Aorta (tissue), 5 donors: ENCODE measurements at regions of chr18 and their contacts with region 1.

Region 1: DNA sequence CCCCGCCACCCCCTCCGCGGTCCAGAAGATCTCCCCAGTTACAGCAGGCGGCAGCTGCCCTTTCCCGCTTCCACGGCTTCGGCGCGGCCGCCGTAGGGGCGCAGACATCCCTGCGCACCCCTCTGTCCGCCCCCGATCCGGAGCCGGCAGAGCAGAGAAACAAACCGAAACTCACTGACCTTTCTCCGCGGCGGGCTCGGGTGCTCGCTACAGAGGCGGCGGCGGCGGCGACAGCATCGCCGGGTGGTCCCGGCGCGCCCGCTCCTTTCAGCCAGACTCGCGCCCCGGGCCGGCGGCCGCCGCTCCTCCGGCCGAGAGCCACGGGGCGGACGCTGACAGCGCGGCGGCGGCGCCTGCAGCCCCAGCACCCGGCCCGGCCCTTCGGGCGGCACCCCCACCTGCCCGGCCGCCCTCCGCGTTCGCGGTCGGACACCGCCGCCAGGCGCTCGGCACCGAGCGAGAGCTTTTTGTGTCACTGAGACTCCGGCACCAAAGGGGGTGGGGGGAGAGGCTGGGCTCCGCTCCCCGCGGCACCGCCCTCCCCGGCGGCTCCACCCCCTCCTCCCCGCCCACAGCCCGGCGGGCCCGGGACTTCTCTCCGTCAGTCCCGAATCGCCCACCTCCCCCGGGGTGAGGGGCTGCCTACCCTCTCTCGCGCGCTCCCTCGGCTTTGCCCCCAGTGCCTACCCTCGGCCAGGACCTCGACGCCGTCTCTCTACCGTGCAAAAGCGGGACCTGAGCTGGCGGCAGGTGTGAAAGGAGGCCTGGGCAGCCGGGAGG is 1.4 kb upstream of the RNF152 start:
- DNase-seq: peak; percentile 87 to 93
- ATAC-seq: peak; percentile 94
- H3K4me3 ChIP-seq: peak overlapping the region; percentile 94 to 98
- H3K27ac ChIP-seq: peak overlapping the region; percentile 79 to 88
- H3K4me1 ChIP-seq: peaks cover 0 to 3% of the 10 kb centered on the region in 2 donors
- H3K27me3 ChIP-seq: no peaks in the 10 kb centered on the region

Region 2: DNA sequence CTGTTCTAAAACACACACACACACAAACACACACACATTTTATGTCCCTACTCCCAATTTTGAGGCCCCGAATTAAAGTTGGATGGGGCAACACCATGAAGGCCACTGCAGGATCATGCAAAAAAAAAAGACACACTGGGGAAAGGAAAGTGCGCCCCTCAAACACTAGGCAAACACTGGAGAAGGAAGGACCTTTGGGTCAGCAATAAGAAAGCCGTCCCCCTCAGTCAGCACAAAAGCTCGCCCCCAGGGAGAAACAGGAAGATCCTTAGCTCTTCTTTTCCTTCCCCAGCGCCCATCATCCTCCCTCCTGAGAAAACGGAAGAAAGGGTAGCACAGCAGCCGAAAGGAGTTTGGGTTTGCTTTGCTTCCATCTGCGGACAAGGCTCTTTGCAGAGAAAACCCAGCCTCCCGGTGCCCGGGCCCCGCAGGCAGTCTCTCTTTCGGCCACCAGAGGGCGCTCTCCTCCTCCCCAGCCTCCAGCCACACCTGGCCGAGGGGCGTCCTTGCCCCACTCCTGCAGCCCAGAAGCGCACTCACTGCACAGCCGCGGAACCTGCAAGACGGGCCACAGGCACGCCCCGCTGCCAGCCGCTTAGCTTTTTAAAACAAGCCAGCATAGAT is 312.5 kb before region 1 on chr18:
- intact Hi-C with region 1: loop called in 1 of 2 experiments (anchors 5 kb)
- DNase-seq: peak; percentile 77 to 93
- ATAC-seq: peak; percentile 94
- H3K4me3 ChIP-seq: peak overlapping the region in 1 of 2 donors; percentile 52
- H3K27ac ChIP-seq: no peak overlapping the region
- H3K4me1 ChIP-seq: peaks cover 0 to 4% of the 10 kb centered on the region in 2 donors
- H3K27me3 ChIP-seq: no peaks in the 10 kb centered on the region

Region 3: DNA sequence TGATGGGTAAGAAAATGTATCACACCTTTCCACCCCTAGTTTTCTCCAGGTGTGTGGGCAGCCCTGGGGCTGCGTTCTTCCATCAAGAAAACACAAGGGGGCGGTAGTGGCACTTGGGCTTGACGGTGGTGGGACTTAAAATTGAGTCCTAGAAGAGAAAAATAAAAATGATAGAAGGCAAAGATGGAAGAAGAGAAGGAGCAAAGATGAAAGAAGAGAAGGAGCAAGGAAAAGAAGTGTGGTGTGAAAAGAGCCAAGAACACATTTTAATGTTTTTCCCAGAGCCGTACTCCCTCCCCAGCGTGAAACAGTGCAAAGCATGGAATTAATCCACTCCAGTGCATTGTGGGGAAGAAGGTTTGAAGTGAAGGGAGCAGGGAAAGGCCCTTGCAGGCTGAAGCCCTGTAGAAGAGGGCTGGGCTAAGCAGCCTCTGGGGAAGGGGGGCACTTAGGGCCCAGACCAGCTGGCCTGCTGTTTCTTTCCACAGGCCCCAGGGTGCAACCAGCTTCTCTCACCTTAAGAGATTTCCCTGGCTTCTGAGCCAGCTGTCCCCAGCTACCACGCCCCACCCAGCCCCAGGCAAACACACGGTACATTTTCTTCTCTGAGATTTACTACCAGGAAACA is 258.1 kb before region 1 on chr18:
- intact Hi-C with region 1: loop called (anchors 2 kb)
- DNase-seq: peak in 1 of 2 donors; percentile 57
- ATAC-seq: peak; percentile 82
- H3K4me3 ChIP-seq: no peak overlapping the region
- H3K27ac ChIP-seq: no peak overlapping the region
- H3K4me1 ChIP-seq: no peaks in the 10 kb centered on the region
- H3K27me3 ChIP-seq: no peaks in the 10 kb centered on the region

Region 4: GRCh38 chr18:61743775-61744531 is 150.2 kb before region 1 on chr18:
- intact Hi-C with region 1: loop called (anchors 5 kb)
- DNase-seq: no peak
- ATAC-seq: no peak
- H3K4me3 ChIP-seq: no peak overlapping the region
- H3K27ac ChIP-seq: peak overlapping the region; percentile 41 to 84
- H3K4me1 ChIP-seq: peaks cover 8 to 12% of the 10 kb centered on the region in 2 donors
- H3K27me3 ChIP-seq: no peaks in the 10 kb centered on the region

Region 5: DNA sequence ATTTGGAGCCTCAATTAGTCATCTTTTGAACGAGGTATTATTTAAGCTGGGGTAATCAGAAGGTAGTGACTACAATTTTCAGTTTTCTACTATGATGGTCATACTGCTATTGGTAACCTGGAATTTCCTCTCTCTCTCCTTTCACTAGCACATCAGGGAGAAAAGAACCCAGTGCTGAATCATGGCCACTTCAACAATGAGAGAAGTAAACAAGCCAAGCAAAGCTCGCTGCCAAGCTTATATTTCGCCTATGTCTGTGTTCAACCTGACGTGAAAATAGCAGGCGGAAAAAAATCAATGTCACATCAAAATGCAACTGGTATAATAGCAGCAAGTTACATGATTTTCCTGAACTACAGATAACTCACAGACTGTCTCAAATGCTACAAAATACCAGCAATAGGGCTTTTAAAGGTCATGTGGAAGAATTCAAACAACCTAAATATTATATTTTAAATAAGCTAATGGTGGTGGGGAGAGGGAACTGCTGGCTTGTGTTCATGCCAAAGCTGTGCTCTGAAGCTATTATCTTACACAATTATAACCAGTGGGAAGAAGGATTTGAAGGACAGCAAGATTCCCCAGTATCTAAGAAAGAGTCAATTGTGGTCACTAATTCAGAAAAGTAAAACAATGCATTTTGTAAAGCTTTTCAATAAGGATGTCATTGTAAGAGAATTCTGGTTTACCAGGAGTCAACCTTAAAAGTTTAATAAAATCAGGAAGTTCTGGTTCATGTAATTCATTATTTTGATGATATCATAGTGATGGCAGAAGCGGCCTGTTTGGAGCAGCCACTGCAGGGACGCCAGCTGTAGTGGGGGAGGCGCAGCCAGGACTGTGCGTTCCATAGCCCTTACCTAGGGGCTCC is 39.3 kb before region 1 on chr18:
- intact Hi-C with region 1: loop called in 1 of 2 experiments (anchors 5 kb)
- DNase-seq: no peak
- ATAC-seq: no peak
- H3K4me3 ChIP-seq: no peak overlapping the region
- H3K27ac ChIP-seq: no peak overlapping the region
- H3K4me1 ChIP-seq: peaks cover 2 to 3% of the 10 kb centered on the region in 2 donors
- H3K27me3 ChIP-seq: no peaks in the 10 kb centered on the region

Region 6: GRCh38 chr18:61992285-61992684 is 98.1 kb after region 1 on chr18:
- intact Hi-C with region 1: loop called in 1 of 2 experiments (anchors 10 kb)
- DNase-seq: no peak
- ATAC-seq: no peak
- H3K4me3 ChIP-seq: no peak overlapping the region
- H3K27ac ChIP-seq: peak overlapping the region; percentile 17 to 85
- H3K4me1 ChIP-seq: peaks cover 5 to 10% of the 10 kb centered on the region in 2 donors
- H3K27me3 ChIP-seq: no peaks in the 10 kb centered on the region

Region 7: DNA sequence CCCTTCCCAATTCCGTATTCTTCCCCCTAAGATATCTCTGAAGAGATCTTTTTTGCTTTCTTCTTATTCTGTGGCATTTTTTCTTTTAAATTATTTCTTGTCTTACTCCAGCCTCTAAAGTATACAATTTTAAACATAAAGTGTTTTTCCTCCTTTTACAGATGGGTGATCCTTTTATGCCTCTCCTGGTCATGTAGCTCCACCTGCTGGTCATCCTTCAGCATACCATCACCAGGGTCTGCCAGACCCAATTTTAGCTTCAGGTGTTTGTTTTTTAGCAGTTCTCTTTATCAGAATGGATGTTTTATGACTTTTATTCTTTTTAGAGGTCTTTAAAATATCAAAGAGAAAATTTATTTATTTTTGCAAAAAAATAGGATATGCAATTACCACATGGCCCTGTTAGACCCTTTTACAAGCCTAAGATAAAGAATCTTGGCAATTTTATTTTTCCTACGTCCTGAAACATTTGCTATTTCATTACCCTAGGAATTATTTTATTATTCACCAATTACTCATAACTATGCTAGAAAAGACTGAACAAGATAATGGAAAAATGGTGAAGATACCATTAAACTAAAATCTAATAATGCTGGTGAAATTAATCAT is 237.2 kb after region 1 on chr18:
- intact Hi-C with region 1: loop called (anchors 5 kb)
- DNase-seq: peak in 1 of 2 donors; percentile 49
- ATAC-seq: no peak
- H3K4me3 ChIP-seq: no peak overlapping the region
- H3K27ac ChIP-seq: no peak overlapping the region
- H3K4me1 ChIP-seq: no peaks in the 10 kb centered on the region
- H3K27me3 ChIP-seq: no peaks in the 10 kb centered on the region

Region 8: GRCh38 chr18:62425465-62426195 is 531.5 kb after region 1 on chr18:
- intact Hi-C with region 1: no loop called
- DNase-seq: peak in 1 of 2 donors; percentile 75
- ATAC-seq: peak; percentile 97
- H3K4me3 ChIP-seq: peak overlapping the region; percentile 25 to 36
- H3K27ac ChIP-seq: peak overlapping the region in 1 of 2 donors; percentile 83
- H3K4me1 ChIP-seq: peaks cover 0 to under 1% of the 10 kb centered on the region in 2 donors
- H3K27me3 ChIP-seq: no peaks in the 10 kb centered on the region